Calu3 (cell line): ENCODE measurements at regions of chr2 and their contacts with region 1.

Region 1: DNA sequence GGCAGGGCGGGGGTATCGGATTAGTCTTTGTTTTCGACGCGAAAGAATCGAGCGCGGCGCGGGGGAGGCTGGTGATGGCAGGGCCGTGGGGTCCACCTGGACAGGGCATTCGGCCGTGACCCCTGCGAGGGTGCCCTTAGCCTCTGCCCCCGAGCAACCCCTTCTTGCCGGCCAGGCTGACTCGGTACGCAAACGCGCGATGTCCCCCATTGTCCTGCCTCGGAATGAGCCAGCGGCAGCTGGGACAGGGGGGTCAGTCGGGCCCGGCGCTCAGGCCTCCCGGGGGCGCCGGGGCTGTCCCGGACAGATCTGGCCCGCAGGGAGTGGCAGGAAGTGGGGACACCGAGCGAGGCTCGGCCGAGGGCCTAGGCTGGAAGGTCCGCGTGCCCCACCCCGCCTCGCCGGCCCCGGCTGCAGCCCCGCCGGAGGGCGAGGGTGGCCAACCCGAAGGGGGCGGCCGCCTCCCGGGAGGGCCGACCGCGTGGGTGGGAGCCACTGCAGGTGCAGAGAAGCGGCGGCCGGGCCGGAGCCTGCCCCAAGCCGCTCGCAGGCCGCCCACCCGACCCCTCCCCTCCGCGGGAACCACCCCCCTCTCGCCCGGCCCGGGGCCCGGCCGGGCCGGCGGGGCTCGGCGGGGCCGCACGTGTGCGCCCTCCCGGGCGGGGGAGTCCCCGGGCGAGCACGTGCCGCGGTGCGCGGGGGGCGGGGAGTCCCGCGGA is at the start of gene TET3:
- DNase-seq: peak; percentile 73
- H3K4me3 Mint-ChIP-seq: peak within 1 kb of the TSS; percentile 81
- H3K27ac Mint-ChIP-seq: peak within 1 kb of the TSS; percentile 95
- H3K4me1 Mint-ChIP-seq: peaks cover 79% of the 10 kb centered on the region
- H3K27me3 Mint-ChIP-seq: no peaks in the 10 kb centered on the region
- CTCF ChIP-seq: no peak
- total RNA-seq, gene TET3: 23.3 and 24.4 TPM in 2 replicates

Region 2: DNA sequence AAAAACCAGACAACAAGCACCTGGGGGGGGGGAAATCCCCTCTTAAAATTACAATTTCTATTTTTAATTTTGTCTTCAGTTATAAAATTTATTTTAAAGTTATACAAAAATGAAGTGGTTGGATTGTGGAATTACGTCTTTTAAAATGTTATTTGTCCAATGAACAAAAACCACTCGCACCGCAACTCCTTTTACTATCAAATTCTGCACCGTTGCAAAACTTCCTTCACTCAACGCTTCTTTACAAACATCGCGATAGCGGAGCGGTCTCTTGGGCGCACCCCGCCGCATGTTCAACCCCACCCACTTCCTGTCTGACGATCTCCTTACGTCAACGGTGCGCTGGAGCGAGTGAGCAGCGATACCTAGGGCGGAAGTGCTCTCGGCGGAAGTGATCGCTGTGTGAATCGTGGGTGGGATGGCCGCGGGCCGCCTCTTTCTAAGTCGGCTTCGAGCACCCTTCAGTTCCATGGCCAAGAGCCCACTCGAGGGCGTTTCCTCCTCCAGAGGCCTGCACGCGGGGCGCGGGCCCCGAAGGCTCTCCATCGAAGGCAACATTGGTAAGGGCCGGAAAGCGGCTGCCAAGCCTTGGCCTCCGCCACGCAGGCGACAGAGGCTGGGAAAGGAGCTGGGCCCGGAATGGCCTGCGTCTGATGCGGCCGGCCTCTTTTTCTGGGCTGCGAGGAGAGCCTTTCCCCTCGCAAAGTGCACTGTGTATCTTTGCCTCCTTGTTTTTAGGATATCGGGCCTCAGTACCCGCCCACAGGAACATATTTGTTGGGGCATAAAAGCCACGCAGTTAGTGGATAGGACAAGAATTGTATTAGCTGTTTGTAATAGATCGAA is 57.6 kb before region 1 on chr2 and contains the start of gene DGUOK:
- CTCF ChIA-PET with region 1: interaction called, 5 read pairs
- intact Hi-C with region 1: loop called (anchors 1 kb)
- DNase-seq: peak; percentile 96
- H3K4me3 Mint-ChIP-seq: peak within 1 kb of the TSS; percentile 68
- H3K27ac Mint-ChIP-seq: peak within 1 kb of the TSS; percentile 91
- H3K4me1 Mint-ChIP-seq: peaks cover 43% of the 10 kb centered on the region
- H3K27me3 Mint-ChIP-seq: no peaks in the 10 kb centered on the region
- CTCF ChIP-seq: no peak
- total RNA-seq, gene DGUOK: 78.6 and 82.8 TPM in 2 replicates

Region 3: GRCh38 chr2:74119912-74120825 is 135.8 kb after region 1 on chr2:
- CTCF ChIA-PET with region 1: no interaction called
- intact Hi-C with region 1: loop called (anchors 5 kb)
- DNase-seq: peak; percentile 92
- H3K4me3 Mint-ChIP-seq: peak overlapping the region; percentile 82
- H3K27ac Mint-ChIP-seq: peak overlapping the region; percentile 81
- H3K4me1 Mint-ChIP-seq: no peaks in the 10 kb centered on the region
- H3K27me3 Mint-ChIP-seq: no peaks in the 10 kb centered on the region
- CTCF ChIP-seq: peak; percentile 61

Region 4: DNA sequence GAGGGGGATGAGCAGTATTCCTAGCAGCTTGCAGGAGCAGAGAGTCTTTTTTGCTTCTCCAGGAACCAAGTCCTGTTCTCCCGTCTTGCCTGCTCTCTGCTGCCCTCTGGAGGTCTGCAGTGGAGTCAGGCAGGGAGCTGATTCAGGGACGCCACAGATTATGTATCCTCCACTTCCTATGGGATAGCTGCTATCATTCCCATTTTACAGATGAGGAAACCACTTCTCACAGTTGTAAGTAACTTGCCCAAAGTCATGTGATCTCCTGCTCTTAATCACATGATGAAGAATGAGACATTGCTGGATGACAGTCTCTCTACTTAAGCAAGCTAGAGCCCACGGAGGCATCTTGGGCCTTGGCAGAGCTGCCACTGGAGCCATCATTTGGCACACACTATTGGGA is 350.6 kb after region 1 on chr2:
- CTCF ChIA-PET with region 1: no interaction called
- intact Hi-C with region 1: no loop called
- DNase-seq: peak; percentile 83
- H3K4me3 Mint-ChIP-seq: no peak overlapping the region
- H3K27ac Mint-ChIP-seq: no peak overlapping the region
- H3K4me1 Mint-ChIP-seq: no peaks in the 10 kb centered on the region
- H3K27me3 Mint-ChIP-seq: no peaks in the 10 kb centered on the region
- CTCF ChIP-seq: peak; percentile 89

Region 5: DNA sequence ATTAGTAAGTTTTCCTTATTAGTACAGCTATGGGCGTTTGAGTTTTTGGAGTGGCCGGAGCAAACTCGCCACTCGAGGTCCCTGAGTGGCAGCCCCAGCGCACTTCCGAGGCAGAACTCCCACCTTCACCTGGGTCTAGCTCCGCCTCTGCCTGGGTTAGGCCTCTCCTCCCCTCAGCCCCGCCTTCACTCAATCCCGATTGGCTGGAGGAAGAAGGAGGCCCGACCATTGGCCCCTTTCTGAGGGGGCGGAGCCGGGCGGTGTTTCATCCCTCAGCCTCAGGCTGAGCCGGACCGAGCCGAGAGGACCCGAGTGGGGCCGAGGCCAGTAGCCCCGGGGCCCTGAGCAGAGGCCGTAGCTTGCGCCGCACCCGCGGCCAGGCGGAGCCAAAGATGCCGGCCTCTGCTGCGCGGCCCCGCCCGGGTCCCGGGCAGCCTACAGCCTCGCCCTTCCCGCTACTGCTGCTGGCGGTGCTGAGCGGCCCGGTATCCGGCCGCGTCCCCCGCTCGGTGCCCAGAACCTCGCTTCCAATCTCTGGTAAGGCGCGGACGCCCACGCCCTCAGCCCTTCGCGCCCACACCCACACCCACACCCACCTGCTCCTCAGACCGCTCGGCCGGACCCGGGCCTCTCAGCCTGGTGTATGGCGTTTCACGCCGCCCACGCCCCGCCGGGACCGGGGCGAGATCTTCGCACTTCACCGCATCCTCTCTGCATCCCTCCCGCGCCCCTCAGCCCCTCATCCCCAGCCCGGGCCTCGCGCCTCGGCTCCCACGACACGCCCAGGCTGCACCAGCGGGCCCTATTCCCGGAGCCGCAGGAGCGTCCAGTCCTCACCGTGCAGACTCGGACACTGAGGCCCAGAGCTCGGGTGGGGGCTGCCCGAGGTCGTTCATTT is 669.9 kb after region 1 on chr2 and contains the start of gene SEMA4F:
- CTCF ChIA-PET with region 1: no interaction called
- intact Hi-C with region 1: no loop called
- DNase-seq: peak; percentile 98
- H3K4me3 Mint-ChIP-seq: peak within 1 kb of the TSS; percentile 69
- H3K27ac Mint-ChIP-seq: peak within 1 kb of the TSS; percentile 25
- H3K4me1 Mint-ChIP-seq: peaks cover 13% of the 10 kb centered on the region
- H3K27me3 Mint-ChIP-seq: peaks cover 9% of the 10 kb centered on the region
- CTCF ChIP-seq: no peak
- total RNA-seq, gene SEMA4F: 9.5 and 10.1 TPM in 2 replicates